Dendritic cell treated with granulocyte-macrophage colony-stimulating factor and Interleukin-4, amounts not matched to agents 40 ng/mL and 50 ng/mL, for 4 days (primary cell): ENCODE measurements at regions of chr4 and their contacts with region 1.

Region 1: GRCh38 chr4:87848622-87849351 is 16.0 kb downstream of the MEPE start:
- H3K4me3 Mint-ChIP-seq: no peak overlapping the region
- H3K27ac Mint-ChIP-seq: no peak overlapping the region
- H3K4me1 Mint-ChIP-seq: peaks cover 50% of the 10 kb centered on the region
- H3K27me3 Mint-ChIP-seq: peaks cover 7% of the 10 kb centered on the region

Region 2: GRCh38 chr4:87390891-87391575 is 457.8 kb before region 1 on chr4 and contains the start of gene HSD17B11:
- intact Hi-C with region 1: loop called (anchors 5 kb)
- H3K4me3 Mint-ChIP-seq: peak within 1 kb of the TSS; percentile 90
- H3K27ac Mint-ChIP-seq: peak within 1 kb of the TSS; percentile 93
- H3K4me1 Mint-ChIP-seq: peaks cover 36% of the 10 kb centered on the region
- H3K27me3 Mint-ChIP-seq: no peaks in the 10 kb centered on the region

Region 3: GRCh38 chr4:87498446-87498900 is 350.3 kb before region 1 on chr4:
- intact Hi-C with region 1: loop called (anchors 5 kb)
- H3K4me3 Mint-ChIP-seq: no peak overlapping the region
- H3K27ac Mint-ChIP-seq: no peak overlapping the region
- H3K4me1 Mint-ChIP-seq: no peaks in the 10 kb centered on the region
- H3K27me3 Mint-ChIP-seq: no peaks in the 10 kb centered on the region

Region 4: GRCh38 chr4:87679449-87680169 is 169.2 kb before region 1 on chr4:
- intact Hi-C with region 1: loop called (anchors 1 kb)
- H3K4me3 Mint-ChIP-seq: no peak overlapping the region
- H3K27ac Mint-ChIP-seq: no peak overlapping the region
- H3K4me1 Mint-ChIP-seq: no peaks in the 10 kb centered on the region
- H3K27me3 Mint-ChIP-seq: no peaks in the 10 kb centered on the region

Region 5: GRCh38 chr4:87973283-87974169 is 124.7 kb after region 1 on chr4:
- intact Hi-C with region 1: loop called (anchors 1 kb)
- H3K4me3 Mint-ChIP-seq: no peak overlapping the region
- H3K27ac Mint-ChIP-seq: no peak overlapping the region
- H3K4me1 Mint-ChIP-seq: peaks cover 7% of the 10 kb centered on the region
- H3K27me3 Mint-ChIP-seq: peaks cover 24% of the 10 kb centered on the region